H1 (cell line): ENCODE measurements at regions of chr2 and their contacts with region 1.

Region 1: DNA sequence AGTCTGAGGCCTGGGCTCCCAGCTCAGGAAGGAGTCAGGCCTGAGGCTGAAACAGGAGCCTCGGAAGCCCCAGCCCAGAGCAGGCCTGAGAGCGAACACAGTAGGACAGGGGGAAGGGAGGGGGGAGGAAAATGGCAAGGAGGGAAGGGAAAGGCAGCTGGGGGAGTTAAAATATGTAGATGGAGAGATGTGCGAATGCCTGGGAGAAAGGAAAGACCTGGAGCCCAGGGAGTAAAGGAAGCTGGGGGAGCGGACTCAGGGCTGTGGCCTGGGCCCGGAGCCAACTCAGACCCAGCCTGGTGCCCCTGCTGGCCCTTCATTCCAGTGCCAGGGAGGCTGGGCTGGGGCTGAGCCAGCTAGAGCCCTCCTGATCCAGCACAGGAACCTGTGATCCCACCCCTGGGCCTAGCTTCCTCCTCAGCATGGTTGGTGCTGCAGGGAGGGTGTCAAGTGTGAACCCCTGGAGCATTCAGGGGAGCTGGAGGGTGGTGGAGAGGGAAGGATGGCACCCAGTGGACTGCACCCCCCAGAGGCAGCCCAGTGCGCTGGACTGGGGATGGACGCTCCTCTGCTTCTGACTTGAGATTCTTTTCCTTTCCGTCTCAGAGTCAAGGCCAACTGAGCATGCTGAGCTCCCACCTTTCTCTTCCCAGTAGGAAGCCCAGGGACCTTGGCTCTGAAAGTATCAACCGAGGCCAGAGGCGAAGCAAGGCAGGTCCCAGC is 46.3 kb downstream of the EMX1 start:
- DNase-seq: peak; percentile 61 to 76
- H3K4me3 ChIP-seq: 0 out of 8 replicates have a peak overlapping the region, but pooled peaks of 1 of the 4 experiments have one; percentile 2
- H3K27ac ChIP-seq: peak overlapping the region; percentile 49; the same call in 1 of the 2 replicates
- H3K4me1 ChIP-seq: peaks cover 12 to 26% (median 22%) of the 10 kb centered on the region in 4 experiments
- H3K27me3 ChIP-seq: peaks cover 0 to 5% (median 0%) of the 10 kb centered on the region in 4 experiments; a peak in 1 of 7 replicates
- CTCF ChIP-seq: no peak
- EP300 ChIP-seq: peak in 1 of 2 experiments; percentile 69; a peak in 1 of 3 replicates
- POLR2A ChIP-seq: no peak
- RAD21 ChIP-seq: peak; percentile 17 to 30; a peak in 3 of 4 replicates

Region 2: GRCh38 chr2:72669121-72669520 is 294.5 kb before region 1 on chr2:
- CTCF ChIA-PET with region 1: no interaction called
- POLR2A ChIA-PET with region 1: no interaction called
- DNase-seq: no peak
- H3K4me3 ChIP-seq: no peak overlapping the region
- H3K27ac ChIP-seq: no peak overlapping the region
- H3K4me1 ChIP-seq: no peaks in the 10 kb centered on the region
- H3K27me3 ChIP-seq: no peaks in the 10 kb centered on the region
- CTCF ChIP-seq: no peak
- EP300 ChIP-seq: no peak
- POLR2A ChIP-seq: no peak
- RAD21 ChIP-seq: no peak

Region 3: DNA sequence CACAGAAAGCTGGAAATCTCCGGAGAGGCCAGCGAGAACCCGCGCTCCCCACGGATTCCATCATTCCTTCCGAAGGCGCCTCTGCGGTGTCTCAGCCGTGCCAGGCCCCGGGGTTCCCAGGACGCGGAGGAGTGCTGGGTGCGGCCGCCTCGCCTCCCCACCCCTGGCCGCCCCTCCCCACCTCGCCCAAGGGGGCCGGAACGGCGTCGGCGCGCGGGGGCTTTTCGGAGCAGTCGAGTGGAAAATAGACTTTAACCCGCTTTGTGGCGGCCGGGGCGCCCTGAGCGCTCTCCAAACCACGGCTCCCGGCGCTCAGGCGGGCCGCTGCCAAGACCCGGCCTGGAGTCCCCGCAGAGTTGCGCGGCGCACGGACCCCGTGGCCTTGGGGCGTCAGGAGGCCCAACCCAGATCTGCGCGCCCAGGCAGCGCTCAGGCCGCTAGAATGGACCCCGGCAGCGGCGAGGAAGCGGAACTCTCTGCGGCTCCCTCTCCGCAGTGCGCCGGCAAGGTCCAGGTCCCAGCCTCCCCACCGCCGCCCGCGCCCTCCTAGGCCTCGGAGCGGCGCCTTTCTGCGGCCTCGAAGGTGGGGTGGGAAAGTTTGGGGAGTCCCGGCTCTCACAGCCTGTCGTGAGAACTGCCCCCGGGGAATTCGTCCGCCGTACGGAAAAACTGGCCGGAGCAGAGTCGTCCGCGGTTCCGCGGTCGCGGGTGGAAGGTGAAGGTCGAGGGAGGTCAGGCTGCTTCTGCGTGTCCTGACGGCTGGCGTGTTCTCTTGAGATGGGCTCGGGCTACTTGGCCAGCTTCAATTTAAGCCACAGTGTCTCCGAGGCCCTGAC is 47.5 kb before region 1 on chr2:
- CTCF ChIA-PET with region 1: interaction called, 11 read pairs
- POLR2A ChIA-PET with region 1: interaction called, 21 read pairs
- DNase-seq: peak in 1 of 2 experiments; percentile 86
- H3K4me3 ChIP-seq: peak overlapping the region; percentile 55 to 70 (median 66)
- H3K27ac ChIP-seq: no peak overlapping the region
- H3K4me1 ChIP-seq: peaks cover 20 to 52% (median 28%) of the 10 kb centered on the region in 4 experiments
- H3K27me3 ChIP-seq: peaks cover 80 to 96% (median 89%) of the 10 kb centered on the region in 4 experiments
- CTCF ChIP-seq: no peak
- EP300 ChIP-seq: no peak
- POLR2A ChIP-seq: no peak
- RAD21 ChIP-seq: no peak

Region 4: DNA sequence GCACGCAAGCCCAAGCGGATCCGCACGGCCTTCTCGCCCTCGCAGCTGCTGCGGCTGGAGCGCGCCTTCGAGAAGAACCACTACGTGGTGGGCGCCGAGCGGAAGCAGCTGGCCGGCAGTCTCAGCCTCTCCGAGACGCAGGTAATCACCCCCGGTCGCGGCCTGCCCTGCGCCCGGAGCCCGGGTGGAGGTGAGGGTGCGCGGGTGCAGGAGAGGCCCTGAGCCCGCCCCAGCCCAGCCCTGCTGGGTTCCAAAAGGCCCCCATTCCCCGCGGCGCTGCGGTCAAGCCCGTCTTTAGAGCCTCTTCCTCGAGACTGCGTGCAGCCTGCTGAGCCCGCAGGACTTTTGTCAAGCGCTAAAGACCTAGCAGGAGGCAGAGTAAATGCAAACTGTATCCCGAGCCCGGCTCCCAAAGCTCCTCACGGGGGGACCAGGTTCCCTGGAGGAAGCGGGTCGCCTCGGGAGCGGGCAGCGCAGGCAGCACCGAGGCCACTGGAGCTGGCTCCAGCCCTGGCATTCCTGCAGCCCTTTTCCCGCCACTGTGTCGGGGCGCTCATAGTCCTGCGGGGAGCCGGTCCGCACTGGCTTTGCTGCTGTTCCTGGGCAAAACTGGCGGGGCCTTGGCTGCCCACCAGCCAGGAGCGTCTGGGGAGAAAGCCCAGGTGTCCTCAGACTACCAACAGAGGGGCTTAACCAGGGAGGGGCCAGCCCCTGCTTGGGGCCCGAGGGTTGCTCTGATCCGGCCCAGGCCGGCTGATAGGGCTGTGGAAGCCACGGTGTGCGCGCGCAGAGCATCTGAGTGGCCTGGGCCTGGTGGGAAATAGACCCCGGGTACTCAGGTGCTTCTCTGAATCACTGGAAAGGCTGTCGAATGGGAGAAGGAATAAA is 39.0 kb before region 1 on chr2:
- CTCF ChIA-PET with region 1: interaction called, 45 read pairs
- POLR2A ChIA-PET with region 1: interaction called, 9 read pairs
- DNase-seq: peak in 1 of 2 experiments; percentile 81
- H3K4me3 ChIP-seq: peak overlapping the region in 3 of 4 experiments; percentile 19 to 54 (median 21); a peak in 6 of 8 replicates
- H3K27ac ChIP-seq: no peak overlapping the region
- H3K4me1 ChIP-seq: peaks cover 6 to 37% (median 18%) of the 10 kb centered on the region in 4 experiments
- H3K27me3 ChIP-seq: peaks cover 89 to 100% (median 97%) of the 10 kb centered on the region in 4 experiments
- CTCF ChIP-seq: no peak
- EP300 ChIP-seq: no peak
- POLR2A ChIP-seq: no peak
- RAD21 ChIP-seq: no peak; a peak in 1 of 4 replicates

Region 5: DNA sequence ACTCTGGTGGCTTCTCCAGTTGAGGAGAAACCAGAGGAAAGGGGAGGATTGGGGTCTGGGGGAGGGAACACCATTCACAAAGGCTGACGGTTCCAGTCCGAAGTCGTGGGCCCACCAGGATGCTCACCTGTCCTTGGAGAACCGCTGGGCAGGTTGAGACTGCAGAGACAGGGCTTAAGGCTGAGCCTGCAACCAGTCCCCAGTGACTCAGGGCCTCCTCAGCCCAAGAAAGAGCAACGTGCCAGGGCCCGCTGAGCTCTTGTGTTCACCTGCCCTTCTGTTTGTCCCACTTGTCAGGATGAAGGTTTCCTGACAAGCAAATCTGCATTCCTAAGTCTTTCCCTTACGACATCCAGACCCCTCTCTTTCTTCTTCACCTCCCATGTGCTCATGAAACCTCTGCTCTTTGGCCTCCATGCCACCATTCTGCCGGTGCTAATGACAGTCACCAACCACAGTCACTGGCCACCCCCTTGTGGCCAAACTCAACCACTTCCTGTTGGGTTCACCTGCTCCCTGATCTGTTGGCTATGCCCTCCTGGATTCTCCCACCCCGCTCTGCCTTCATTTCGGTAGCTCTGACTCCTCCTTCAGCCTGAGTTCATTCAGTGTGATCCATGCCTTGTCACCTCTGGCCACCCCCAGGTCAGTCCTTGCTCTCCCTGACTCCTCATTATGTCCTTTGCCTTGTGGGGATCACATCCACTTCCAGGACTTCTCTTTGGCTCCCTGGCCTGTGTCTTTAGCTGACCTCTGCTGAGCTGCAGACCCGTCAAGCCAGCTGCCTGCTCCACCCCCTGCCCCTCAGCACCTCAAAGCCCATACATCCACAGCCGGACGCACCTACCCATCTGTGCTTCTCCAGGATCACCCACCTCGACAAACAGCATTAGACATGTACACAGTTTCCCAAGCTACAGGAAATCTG is 28.6 kb before region 1 on chr2:
- CTCF ChIA-PET with region 1: interaction called, 17 read pairs
- POLR2A ChIA-PET with region 1: interaction called, 3 read pairs
- DNase-seq: no peak
- H3K4me3 ChIP-seq: no peak overlapping the region
- H3K27ac ChIP-seq: no peak overlapping the region
- H3K4me1 ChIP-seq: peaks cover 0 to 16% (median 9%) of the 10 kb centered on the region in 4 experiments; a peak in 5 of 7 replicates
- H3K27me3 ChIP-seq: peaks cover 0 to 19% (median 10%) of the 10 kb centered on the region in 4 experiments; a peak in 3 of 7 replicates
- CTCF ChIP-seq: peak in 2 of 3 experiments; percentile 77 to 79; a peak in 3 of 4 replicates
- EP300 ChIP-seq: no peak
- POLR2A ChIP-seq: no peak
- RAD21 ChIP-seq: peak; percentile 79 to 80